ENCODE measurements at regions of chr11 and their contacts with region 1.

Region 1: DNA sequence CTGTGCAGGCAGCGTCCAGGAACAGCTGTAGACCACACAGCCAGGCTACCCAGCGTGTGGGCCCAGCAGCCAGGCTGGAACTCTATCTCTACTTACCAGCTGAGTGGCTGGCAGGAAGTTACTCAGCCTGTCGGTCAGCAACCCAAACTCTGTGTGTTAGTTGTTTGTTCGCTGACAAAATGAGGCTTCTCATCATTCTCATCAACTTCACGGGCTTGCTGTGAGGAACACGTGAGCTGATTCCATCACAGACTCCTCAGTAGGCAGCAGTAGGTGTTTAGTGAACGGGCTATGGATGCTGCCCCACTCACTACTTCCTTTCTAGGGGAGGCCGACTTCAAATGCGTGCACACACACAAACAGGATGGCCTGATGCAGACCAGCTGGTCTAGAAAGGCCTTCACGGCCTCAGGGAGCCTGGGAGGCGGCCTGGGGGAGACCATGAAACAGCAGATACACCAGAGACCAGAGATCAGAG is 830 bp upstream of the SPDYC start:
- DNase-seq: no peak
- H3K4me3 ChIP-seq: no peak overlapping the region
- H3K27me3 ChIP-seq: no peaks in the 10 kb centered on the region
- CTCF ChIP-seq: no peak

Region 2: DNA sequence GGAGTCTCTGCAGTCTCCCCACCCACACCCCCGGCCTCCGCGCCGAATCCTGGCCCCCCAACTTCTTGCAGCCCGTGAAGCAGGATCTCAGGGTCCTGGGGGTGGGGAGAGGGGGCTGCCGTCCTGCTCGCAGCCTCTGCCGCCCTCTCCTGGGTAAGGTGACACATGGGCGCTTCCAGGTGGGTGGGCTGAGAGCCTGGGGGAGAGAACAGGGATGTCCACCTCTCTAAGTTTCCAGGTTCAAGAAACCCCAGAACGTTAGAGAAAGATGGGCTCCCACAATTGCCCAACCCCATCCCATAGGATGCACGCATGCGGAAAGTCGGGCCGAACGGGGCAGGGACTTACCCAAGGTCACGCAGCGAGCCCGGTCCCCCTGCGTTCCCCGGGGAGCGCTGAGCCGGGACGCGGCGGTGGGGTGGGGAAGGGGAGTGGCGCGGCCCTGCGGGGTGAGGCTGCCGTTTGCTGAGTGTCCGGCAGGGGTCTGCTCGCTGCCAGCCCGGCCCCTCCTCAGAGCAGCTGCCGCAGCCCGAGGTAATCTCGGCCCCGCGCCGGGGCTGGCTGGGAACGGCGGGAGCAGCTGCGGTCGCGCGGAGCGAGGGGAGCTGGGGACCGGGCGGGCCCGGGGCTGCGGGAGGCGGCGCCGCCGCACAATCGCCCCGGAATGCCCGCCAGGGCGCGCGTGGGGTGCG is 11.8 kb after region 1 on chr11:
- CTCF ChIA-PET with region 1: interaction called, 14 read pairs
- POLR2A ChIA-PET with region 1: no interaction called
- DNase-seq: no peak
- H3K4me3 ChIP-seq: peak overlapping the region; percentile 81
- H3K27me3 ChIP-seq: no peaks in the 10 kb centered on the region
- CTCF ChIP-seq: peak; percentile 49; the same call in 1 of the 2 replicates

Measured in BJ (cell line).